ENCODE measurements at regions of chr1 and their contacts with region 1.

Region 1: DNA sequence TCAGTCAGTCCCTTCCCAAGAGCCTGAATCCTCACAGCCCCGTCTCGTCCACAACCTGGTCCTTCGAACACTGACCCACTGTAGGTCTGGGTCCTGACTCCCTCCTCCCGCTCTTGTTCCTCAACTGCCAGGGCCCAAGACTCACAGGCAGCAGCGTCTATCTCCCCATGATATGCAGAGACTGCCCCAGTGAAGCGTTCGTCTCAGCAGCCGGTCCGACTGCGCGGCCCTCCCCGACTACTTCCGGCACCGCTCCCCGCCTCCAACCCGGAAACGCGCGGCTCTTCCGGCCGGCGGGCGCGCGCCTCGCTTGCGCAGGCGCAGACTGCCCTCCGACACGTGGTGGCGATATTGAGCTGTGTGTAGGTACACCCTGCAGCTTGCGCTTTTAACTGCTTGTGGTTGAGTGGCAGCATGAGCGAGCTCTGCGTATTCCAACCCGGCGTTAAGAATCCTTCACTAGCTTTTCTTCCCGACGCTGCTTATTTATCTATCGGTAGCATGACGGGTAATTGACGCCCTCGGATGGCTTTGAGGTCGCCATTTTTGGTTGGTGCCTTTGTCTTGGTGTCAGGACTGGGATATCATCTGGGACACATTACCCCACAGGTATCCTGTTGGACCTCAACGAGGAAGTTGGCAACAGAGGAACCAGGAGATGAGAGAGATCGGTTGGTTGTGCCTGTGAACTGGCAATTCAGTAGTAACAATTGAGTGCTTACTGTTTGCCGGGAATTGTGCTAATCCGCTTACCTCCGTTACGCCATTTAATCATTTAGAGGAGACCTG is at the start of gene TAF12:
- DNase-seq: peak; percentile 98
- ATAC-seq: peak; percentile 90
- H3K4me3 ChIP-seq: peak within 1 kb of the TSS; percentile 97
- H3K27ac ChIP-seq: peak within 1 kb of the TSS; percentile 77
- H3K4me1 ChIP-seq: peaks cover 29% of the 10 kb centered on the region
- H3K27me3 ChIP-seq: no peaks in the 10 kb centered on the region
- CTCF ChIP-seq: peak; percentile 44; the same call in 1 of the 2 replicates
- total RNA-seq, gene TAF12: 33.0 and 44.1 TPM in 2 replicates

Region 2: DNA sequence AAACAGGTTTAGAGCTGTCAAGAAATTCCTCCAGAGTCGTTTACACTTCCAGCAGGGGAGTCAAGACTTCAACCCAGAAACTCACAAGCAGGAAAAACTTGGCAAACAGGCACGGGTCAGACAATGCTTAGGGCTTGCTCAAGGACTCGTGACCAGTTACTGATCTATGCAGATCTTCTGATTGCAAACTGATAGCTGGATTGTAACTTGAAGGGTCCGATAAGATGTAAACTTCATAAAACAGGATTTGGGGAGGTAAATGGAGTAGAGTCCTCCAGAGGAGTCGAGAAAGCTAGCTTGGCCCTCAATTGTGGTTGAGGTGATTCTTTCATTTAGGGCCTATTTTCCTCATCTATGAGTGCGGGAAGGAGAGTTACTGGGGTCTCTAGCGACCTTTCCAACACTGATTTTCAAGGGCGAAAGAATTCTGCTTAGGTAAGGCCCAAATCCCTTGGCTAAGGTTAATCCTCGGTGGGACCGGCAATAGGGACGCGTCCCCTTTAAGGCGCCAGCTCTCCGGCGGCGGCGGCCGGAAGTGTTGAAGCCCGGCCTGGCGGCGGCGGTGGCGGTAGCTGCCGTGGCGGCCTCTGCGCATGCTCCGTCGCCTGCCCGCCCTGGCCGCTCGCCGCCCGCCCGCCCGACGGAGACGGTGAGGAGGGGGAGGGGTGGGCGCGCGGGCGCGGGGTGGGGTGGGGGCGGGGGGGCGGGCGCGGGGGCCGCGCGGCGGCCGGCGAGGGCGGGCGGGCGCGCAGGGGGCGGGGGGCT is 25.3 kb after region 1 on chr1 and contains the start of gene GMEB1:
- CTCF ChIA-PET with region 1: no interaction called
- POLR2A ChIA-PET with region 1: interaction called, 30 read pairs
- intact Hi-C with region 1: loop called (anchors 2 kb)
- DNase-seq: peak; percentile 87
- ATAC-seq: peak; percentile 84
- H3K4me3 ChIP-seq: peak within 1 kb of the TSS; percentile 83
- H3K27ac ChIP-seq: peak within 1 kb of the TSS; percentile 68
- H3K4me1 ChIP-seq: peaks cover 10% of the 10 kb centered on the region; the same call in 1 of the 2 replicates
- H3K27me3 ChIP-seq: no peaks in the 10 kb centered on the region
- CTCF ChIP-seq: no peak
- total RNA-seq, gene GMEB1: 5.2 and 10.8 TPM in 2 replicates

Region 3: DNA sequence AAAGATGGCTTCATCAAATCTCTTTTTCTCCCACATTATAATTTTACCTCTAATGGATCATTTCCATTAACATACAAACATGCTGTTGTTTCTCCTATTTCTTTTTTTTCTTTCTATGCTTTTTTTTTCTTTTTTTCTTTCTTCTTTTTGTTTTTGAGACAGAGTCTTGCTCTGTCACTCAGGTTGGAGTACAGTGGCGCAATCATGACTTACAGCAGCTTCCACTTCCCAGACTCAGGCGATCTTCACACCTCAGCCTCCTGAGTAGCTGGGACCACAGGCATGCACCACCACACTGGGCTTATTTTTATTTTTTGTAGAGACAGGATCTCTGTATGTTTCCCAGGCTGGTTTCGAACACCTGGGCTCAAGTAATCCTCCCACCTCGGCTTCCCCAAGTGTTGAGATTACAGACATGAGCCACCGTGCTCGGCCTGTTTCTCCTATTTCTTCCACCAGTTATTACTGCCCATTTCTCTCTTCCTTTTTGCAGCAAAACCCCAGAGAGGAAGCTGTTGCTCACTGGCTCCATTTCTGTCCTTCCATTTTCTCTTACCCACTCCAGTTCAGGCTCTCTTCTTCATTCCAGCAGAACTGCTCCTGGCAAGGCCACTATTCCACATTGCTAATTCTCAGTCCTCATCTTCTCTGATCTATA is 136.8 kb after region 1 on chr1:
- CTCF ChIA-PET with region 1: interaction called, 22 read pairs
- POLR2A ChIA-PET with region 1: no interaction called
- intact Hi-C with region 1: no loop called
- DNase-seq: no peak
- ATAC-seq: no peak
- H3K4me3 ChIP-seq: no peak overlapping the region
- H3K27ac ChIP-seq: no peak overlapping the region
- H3K4me1 ChIP-seq: no peaks in the 10 kb centered on the region
- H3K27me3 ChIP-seq: no peaks in the 10 kb centered on the region
- CTCF ChIP-seq: no peak

Region 4: DNA sequence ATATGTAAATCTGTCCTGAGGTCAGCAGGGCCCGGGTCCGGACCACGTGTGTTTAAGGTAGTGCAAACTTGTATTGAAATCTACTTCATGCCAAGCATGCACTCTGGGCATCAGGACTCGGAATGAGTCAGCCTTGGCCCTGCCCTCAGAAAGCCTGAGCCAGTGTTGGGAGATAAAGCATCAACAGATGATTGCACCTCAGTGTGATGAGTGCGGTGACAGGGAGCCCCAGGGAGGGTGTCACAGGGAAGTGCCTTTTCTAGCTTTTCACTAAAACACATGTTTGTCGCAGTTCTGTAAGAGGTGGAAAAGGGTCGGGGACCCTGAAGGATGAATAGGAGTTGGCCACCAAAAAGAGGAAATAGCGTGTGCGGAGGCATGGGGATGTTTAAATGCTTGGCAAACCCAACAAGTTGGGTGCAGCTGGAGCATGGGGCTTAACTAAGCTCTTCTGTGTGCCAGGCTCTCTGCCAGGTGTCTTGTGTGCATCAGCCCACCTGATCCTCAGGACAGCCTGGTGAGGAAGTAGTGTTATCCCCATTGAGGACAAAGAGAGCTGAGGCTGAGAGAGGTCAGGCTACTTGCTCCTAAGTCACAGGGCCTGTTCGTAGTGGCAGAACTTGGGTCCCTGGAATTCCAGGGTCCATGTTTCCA is 223.1 kb after region 1 on chr1:
- CTCF ChIA-PET with region 1: interaction called, 12 read pairs
- POLR2A ChIA-PET with region 1: no interaction called
- intact Hi-C with region 1: no loop called
- DNase-seq: peak; percentile 47
- ATAC-seq: peak; percentile 74
- H3K4me3 ChIP-seq: no peak overlapping the region
- H3K27ac ChIP-seq: no peak overlapping the region
- H3K4me1 ChIP-seq: no peaks in the 10 kb centered on the region
- H3K27me3 ChIP-seq: no peaks in the 10 kb centered on the region; the same call in 1 of the 2 replicates
- CTCF ChIP-seq: no peak

Region 5: GRCh38 chr1:28886731-28887418 is 243.8 kb after region 1 on chr1:
- CTCF ChIA-PET with region 1: no interaction called
- POLR2A ChIA-PET with region 1: interaction called, 12 read pairs
- intact Hi-C with region 1: no loop called
- DNase-seq: peak; percentile 92
- ATAC-seq: peak; percentile 73
- H3K4me3 ChIP-seq: peak overlapping the region; percentile 93
- H3K27ac ChIP-seq: no peak overlapping the region
- H3K4me1 ChIP-seq: peaks cover 17% of the 10 kb centered on the region
- H3K27me3 ChIP-seq: no peaks in the 10 kb centered on the region
- CTCF ChIP-seq: no peak

Measured in PC-3 (cell line).